ENCODE measurements at regions of chr19 and their contacts with region 1.

Region 1: DNA sequence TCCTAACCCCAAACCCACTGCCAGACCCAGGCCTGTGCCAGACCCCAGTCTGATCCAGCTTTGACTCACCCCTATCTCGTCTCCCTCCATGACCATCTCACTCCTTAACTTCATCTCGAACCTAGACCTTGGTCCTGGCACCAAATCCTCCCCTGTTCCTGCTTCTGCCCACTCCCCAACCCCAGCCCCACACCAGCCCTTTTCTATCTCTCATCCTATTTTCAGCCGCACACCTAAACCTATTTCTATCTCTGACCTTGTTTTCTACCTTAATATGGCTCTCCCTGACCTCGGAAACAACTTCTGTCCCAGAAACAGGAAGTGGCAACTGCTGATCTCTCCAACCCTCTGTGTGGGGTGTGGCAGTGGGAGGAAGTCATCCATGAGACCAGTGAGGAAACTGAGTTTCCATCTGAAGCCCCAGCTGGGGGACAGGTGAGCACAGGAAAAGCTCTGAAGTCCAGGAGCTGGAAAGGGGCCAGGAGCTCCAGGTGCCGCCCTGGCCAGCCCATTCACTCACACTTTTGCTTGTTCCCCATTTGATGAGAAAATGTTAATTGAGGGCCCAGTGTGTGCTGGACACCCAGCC is 13.7 kb downstream of the PTH2 start:
- DNase-seq: peak in 4 of 5 donors; percentile 34 to 46 (median 42)
- H3K4me3 ChIP-seq: peak overlapping the region in 1 of 2 donors; percentile 34
- H3K4me3 Mint-ChIP-seq: peak overlapping the region; percentile 60 to 83 (median 68)
- H3K27ac ChIP-seq: peak overlapping the region; percentile 34
- H3K27ac Mint-ChIP-seq: peak overlapping the region; percentile 76 to 96 (median 92)
- H3K4me1 ChIP-seq: peaks cover 62% of the 10 kb centered on the region
- H3K4me1 Mint-ChIP-seq: peaks cover 37 to 76% (median 55%) of the 10 kb centered on the region in 4 donors
- H3K27me3 ChIP-seq: no peaks in the 10 kb centered on the region
- H3K27me3 Mint-ChIP-seq: no peaks in the 10 kb centered on the region

Region 2: DNA sequence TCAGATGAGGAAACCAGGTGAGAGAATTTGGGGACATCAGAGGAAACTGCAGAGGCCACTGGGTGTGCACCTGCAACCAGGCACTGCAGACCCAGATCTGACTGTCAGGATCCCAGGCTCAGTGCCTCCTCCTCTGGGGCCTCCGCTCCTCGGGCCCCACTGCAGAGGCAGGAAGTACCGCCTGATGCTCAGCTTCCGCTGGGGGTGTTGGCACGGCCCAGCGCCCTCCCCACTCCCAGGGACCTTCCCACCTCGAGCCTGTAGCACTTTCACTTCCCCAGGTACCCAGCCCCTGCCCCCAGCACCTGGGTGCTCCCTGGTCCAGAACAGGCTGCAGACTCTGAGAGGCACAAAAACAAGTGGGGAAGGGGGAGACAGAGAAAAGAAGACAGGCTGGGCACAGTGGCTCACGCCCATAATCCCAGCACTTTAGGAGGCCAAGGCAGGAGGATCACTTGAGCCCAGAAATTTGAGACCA is 75.7 kb before region 1 on chr19:
- CTCF ChIA-PET with region 1: no interaction called
- POLR2A ChIA-PET with region 1: interaction called, 10 read pairs
- intact Hi-C with region 1: no loop called
- DNase-seq: peak; percentile 59 to 85 (median 72)
- H3K4me3 ChIP-seq: peak overlapping the region in 1 of 2 donors; percentile 49
- H3K4me3 Mint-ChIP-seq: peak overlapping the region; percentile 85 to 99 (median 87)
- H3K27ac ChIP-seq: peak overlapping the region; percentile 86
- H3K27ac Mint-ChIP-seq: peak overlapping the region; percentile 93 to 98 (median 95)
- H3K4me1 ChIP-seq: peaks cover 83% of the 10 kb centered on the region
- H3K4me1 Mint-ChIP-seq: peaks cover 49 to 88% (median 66%) of the 10 kb centered on the region in 4 donors
- H3K27me3 ChIP-seq: no peaks in the 10 kb centered on the region
- H3K27me3 Mint-ChIP-seq: no peaks in the 10 kb centered on the region

Region 3: GRCh38 chr19:49391581-49392399 is 17.7 kb before region 1 on chr19:
- CTCF ChIA-PET with region 1: interaction called, 11 read pairs
- POLR2A ChIA-PET with region 1: interaction called, 7 read pairs
- intact Hi-C with region 1: no loop called
- DNase-seq: peak; percentile 76 to 80 (median 78)
- H3K4me3 ChIP-seq: no peak overlapping the region
- H3K4me3 Mint-ChIP-seq: no peak overlapping the region
- H3K27ac ChIP-seq: no peak overlapping the region
- H3K27ac Mint-ChIP-seq: peak overlapping the region in 6 of 7 donors; percentile 9 to 85 (median 60)
- H3K4me1 ChIP-seq: peaks cover 21% of the 10 kb centered on the region
- H3K4me1 Mint-ChIP-seq: peaks cover 8 to 24% (median 11%) of the 10 kb centered on the region in 4 donors
- H3K27me3 ChIP-seq: no peaks in the 10 kb centered on the region
- H3K27me3 Mint-ChIP-seq: no peaks in the 10 kb centered on the region

Region 4: DNA sequence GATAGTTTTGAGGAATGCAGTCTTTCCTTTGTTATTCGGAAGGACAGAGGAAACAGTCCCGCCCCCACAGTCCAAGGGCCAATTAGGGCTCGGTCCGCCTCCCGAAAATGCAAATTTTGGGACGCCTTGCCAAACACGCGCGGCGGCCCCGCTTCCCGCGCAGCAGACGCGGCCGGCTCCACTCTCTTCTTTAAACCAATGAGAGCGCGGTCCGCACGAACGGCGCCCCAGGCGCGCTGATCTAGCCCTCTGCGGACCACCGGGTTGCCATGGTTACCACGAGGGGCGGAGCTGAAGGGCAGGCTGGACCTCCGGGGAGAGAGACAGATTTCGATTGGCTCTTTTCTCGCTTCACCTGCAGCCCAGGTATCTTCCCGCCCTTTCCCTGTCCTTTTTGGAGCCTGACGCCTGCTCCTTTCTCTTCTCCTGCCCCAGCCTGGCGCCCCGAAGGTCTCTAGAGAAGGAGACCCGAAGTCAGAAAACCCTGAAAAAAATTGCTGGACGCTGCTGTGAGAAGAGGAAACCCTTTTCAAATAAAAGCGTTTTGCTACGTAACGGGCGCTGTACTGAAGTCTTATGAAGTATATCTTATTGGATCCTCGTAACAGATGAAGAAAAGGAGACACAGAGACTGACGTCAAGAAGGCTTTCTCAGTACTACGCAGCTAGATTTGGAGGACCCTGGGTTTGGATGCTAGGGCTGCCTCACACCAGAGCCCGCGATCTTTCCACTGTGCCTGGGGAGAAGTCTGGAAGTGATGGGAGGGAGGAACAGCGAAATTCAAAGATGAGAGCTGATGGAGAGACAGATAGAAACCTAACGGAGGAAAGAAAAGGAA is 11.7 kb after region 1 on chr19:
- CTCF ChIA-PET with region 1: interaction called, 5 read pairs
- POLR2A ChIA-PET with region 1: interaction called, 17 read pairs
- intact Hi-C with region 1: no loop called
- DNase-seq: peak in 1 of 5 donors; percentile 24
- H3K4me3 ChIP-seq: no peak overlapping the region
- H3K4me3 Mint-ChIP-seq: peak overlapping the region in 7 of 8 donors; percentile 49 to 87 (median 57)
- H3K27ac ChIP-seq: no peak overlapping the region
- H3K27ac Mint-ChIP-seq: peak overlapping the region in 2 of 7 donors; percentile 67 to 79
- H3K4me1 ChIP-seq: peaks cover 41% of the 10 kb centered on the region
- H3K4me1 Mint-ChIP-seq: peaks cover 28 to 65% (median 44%) of the 10 kb centered on the region in 4 donors
- H3K27me3 ChIP-seq: peaks cover 53% of the 10 kb centered on the region
- H3K27me3 Mint-ChIP-seq: peaks cover 60 to 64% of the 10 kb centered on the region in 2 donors

Region 5: DNA sequence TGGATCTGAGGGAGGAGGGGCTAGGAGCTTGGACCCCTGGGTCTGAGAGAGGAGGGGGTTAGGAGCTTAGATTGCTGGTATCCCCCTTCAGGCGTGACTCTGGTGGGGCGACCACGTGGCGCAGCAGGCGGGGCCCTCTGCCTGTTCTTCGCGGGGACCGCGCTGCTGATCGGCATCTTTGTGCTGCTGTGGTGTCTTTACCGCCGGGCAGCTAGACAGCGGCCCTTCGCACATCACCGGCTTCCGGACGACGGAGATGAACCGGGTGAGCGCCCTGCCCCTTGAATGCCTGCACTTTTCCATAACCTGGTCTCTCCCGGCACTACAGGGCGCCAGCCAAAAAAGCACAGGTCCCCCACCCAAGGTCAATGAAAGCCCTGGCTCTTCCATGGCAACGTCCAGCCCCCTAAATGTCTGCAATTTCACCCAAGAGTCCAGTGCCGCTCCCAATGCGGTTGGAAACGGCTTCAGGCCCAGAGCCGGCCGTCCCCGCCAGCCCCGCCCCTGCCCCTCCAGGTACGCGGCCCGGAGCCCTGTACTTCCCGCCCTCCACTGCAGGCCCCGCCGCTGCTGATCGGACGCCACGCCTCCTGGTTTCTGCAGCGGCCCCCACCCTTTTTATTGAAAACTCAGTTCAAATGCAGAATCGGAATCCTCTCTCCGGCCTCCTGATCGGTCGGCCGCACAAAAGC is 18.5 kb after region 1 on chr19:
- CTCF ChIA-PET with region 1: interaction called, 5 read pairs
- POLR2A ChIA-PET with region 1: interaction called, 10 read pairs
- intact Hi-C with region 1: loop called (anchors 2 kb)
- DNase-seq: peak in 2 of 5 donors; percentile 23 to 40
- H3K4me3 ChIP-seq: peak overlapping the region in 1 of 2 donors; percentile 34
- H3K4me3 Mint-ChIP-seq: peak overlapping the region in 7 of 8 donors; percentile 35 to 68 (median 58)
- H3K27ac ChIP-seq: no peak overlapping the region
- H3K27ac Mint-ChIP-seq: peak overlapping the region in 1 of 7 donors; percentile 46
- H3K4me1 ChIP-seq: peaks cover 43% of the 10 kb centered on the region
- H3K4me1 Mint-ChIP-seq: peaks cover 33 to 87% (median 57%) of the 10 kb centered on the region in 4 donors
- H3K27me3 ChIP-seq: peaks cover 70% of the 10 kb centered on the region
- H3K27me3 Mint-ChIP-seq: peaks cover 65 to 74% of the 10 kb centered on the region in 2 donors

Measured in CD4-positive, alpha-beta memory T cell (primary cell).